ENCODE measurements at regions of chr6 and their contacts with region 1.

Region 1: DNA sequence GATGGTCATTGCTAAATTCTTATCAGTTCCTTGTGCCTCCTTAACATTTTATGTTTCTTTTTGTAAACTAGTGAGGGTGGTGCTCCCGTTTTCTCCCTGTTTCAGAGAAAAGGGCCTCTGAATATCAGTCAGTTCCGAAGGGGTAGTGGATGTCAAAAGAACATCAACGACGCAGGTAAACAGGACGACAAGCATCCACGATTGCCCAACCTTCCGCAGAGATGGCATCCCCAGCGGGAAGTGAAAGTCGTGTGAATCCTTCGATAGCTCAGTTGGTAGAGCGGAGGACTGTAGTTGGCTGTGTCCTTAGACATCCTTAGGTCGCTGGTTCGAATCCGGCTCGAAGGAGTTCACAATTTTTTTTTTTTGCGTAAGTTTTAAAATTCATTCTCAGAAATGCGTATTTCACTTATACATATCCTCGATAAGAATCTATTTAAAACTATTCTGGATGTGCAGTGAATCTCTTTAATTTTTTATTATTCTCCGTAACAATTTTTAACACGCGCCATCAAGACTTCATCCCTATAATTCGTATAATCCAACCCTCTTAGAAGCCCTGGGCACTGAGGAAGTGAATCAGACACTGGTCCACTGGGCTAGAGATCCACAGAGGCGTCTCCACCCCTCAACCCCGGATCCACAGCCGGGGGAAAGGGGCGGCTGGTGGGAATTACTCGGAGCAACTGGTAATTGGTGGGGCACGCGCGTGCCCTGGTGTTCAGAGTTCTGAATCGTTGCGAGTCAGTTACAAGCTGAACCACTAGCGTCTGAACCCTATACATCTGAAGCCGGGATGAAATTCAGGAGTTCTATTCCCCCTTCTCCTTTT is 27.9 kb upstream of the ABT1 start:
- DNase-seq: peak; percentile 87
- H3K4me3 ChIP-seq: peak overlapping the region; percentile 79
- H3K27ac ChIP-seq: peak overlapping the region; percentile 39
- H3K27me3 ChIP-seq: no peaks in the 10 kb centered on the region
- CTCF ChIP-seq: peak; percentile 33

Region 2: DNA sequence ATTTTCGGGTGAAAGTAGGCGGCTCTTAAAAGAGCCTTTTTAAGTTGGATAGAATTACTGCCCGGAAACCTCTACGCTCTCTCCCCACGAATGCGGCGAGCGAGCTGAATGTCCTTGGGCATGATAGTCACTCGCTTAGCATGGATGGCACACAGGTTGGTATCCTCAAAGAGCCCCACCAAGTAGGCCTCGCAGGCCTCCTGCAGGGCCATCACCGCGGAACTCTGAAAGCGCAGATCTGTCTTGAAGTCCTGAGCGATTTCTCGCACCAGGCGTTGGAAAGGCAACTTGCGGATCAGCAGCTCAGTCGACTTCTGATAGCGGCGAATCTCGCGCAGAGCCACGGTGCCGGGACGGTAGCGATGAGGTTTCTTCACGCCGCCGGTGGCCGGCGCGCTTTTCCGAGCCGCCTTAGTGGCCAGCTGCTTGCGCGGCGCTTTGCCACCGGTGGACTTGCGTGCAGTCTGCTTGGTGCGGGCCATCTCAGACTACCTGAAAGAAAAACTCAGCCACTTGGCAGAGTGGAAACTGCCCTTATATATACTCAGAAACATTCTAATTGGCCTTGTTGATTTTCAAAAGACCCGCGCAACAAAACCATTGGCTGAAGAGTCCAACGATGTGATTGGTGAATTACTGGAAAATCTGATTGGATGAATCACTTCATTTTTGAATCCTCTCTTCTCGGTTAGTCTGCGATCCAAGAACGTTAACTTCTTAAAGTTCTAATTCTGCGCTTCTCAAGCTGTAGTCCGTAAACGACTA is 297.7 kb before region 1 on chr6:
- CTCF ChIA-PET with region 1: no interaction called
- POLR2A ChIA-PET with region 1: interaction called, 14 read pairs
- DNase-seq: no peak
- H3K4me3 ChIP-seq: peak overlapping the region; percentile 65
- H3K27ac ChIP-seq: peak overlapping the region; percentile 68
- H3K27me3 ChIP-seq: no peaks in the 10 kb centered on the region
- CTCF ChIP-seq: no peak

Region 3: DNA sequence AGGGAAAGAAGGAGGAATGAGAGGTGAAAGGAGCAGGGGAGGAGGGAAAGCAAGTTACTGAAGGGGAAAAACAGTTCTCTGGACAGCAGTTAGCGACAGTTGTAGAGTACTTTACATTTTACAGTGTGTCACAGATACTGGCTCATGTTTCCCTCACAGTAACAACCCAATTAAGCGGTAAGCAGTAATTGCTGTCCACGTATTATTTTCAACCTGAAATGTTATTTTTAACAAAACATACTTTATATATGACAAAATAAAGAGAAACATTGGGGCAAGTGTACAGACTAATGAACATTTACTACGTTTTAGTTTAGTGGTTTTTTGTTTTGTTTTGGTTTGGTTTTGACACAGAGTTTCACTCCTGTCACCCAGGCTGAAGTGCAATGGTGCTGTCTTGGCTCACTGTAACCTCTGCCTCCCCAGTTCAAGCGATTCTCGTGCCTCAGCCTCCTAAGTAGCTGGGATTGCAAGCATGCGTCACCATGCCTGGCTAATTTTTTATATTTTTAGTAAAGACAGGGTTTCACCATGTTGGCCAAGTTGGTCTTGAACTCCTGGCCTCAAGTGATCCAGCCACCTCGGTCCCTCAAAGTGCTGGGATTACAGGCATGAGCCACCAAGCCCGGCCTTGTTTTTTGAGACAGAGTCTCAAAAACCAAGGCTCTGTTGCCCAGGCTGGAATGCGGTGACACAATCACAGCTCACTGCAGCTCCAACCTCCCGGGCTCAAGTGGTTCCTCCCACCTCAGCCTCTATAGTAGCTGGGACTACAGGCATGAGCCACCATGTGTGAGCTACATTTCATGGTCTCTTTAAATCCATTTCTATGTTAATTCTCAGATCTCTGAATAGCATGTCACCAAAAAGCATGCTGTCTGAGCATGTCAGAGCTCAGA is 226.5 kb before region 1 on chr6:
- CTCF ChIA-PET with region 1: interaction called, 22 read pairs
- POLR2A ChIA-PET with region 1: interaction called, 3 read pairs
- DNase-seq: no peak
- H3K4me3 ChIP-seq: peak overlapping the region; percentile 47
- H3K27ac ChIP-seq: no peak overlapping the region
- H3K27me3 ChIP-seq: no peaks in the 10 kb centered on the region
- CTCF ChIP-seq: no peak

Region 4: GRCh38 chr6:26394289-26394688 is 174.5 kb before region 1 on chr6:
- CTCF ChIA-PET with region 1: no interaction called
- POLR2A ChIA-PET with region 1: no interaction called
- DNase-seq: peak; percentile 32
- H3K4me3 ChIP-seq: no peak overlapping the region
- H3K27ac ChIP-seq: no peak overlapping the region
- H3K27me3 ChIP-seq: no peaks in the 10 kb centered on the region
- CTCF ChIP-seq: no peak

Region 5: GRCh38 chr6:26604026-26604425 is 35.2 kb after region 1 on chr6:
- CTCF ChIA-PET with region 1: no interaction called
- POLR2A ChIA-PET with region 1: no interaction called
- DNase-seq: no peak
- H3K4me3 ChIP-seq: no peak overlapping the region
- H3K27ac ChIP-seq: no peak overlapping the region
- H3K27me3 ChIP-seq: no peaks in the 10 kb centered on the region
- CTCF ChIP-seq: no peak

Region 6: GRCh38 chr6:27078734-27079357 is 510.0 kb after region 1 on chr6:
- CTCF ChIA-PET with region 1: interaction called, 14 read pairs
- POLR2A ChIA-PET with region 1: no interaction called
- DNase-seq: peak; percentile 30
- H3K4me3 ChIP-seq: peak overlapping the region; percentile 22
- H3K27ac ChIP-seq: no peak overlapping the region
- H3K27me3 ChIP-seq: peaks cover 4% of the 10 kb centered on the region
- CTCF ChIP-seq: peak; percentile 74